B cell (primary cell): ENCODE measurements at regions of chr16 and their contacts with region 1.

Region 1: GRCh38 chr16:69123910-69124309 is 8.5 kb downstream of the CHTF8 start:
- DNase-seq: peak; percentile 77
- ATAC-seq: peak; percentile 70
- H3K4me3 ChIP-seq: no peak overlapping the region
- H3K4me3 Mint-ChIP-seq: no peak overlapping the region
- H3K27ac ChIP-seq: no peak overlapping the region
- H3K27ac Mint-ChIP-seq: no peak overlapping the region
- H3K4me1 ChIP-seq: no peaks in the 10 kb centered on the region
- H3K4me1 Mint-ChIP-seq: peaks cover 14% of the 10 kb centered on the region
- H3K27me3 ChIP-seq: no peaks in the 10 kb centered on the region
- H3K27me3 Mint-ChIP-seq: no peaks in the 10 kb centered on the region
- CTCF ChIP-seq: peak; percentile 81

Region 2: GRCh38 chr16:68590201-68590994 is 533.5 kb before region 1 on chr16:
- CTCF ChIA-PET with region 1: interaction called, 12 read pairs
- POLR2A ChIA-PET with region 1: no interaction called
- intact Hi-C with region 1: loop called (anchors 2 kb)
- DNase-seq: peak; percentile 33
- ATAC-seq: no peak
- H3K4me3 ChIP-seq: no peak overlapping the region
- H3K4me3 Mint-ChIP-seq: no peak overlapping the region
- H3K27ac ChIP-seq: no peak overlapping the region
- H3K27ac Mint-ChIP-seq: no peak overlapping the region
- H3K4me1 ChIP-seq: no peaks in the 10 kb centered on the region
- H3K4me1 Mint-ChIP-seq: peaks cover 2% of the 10 kb centered on the region
- H3K27me3 ChIP-seq: no peaks in the 10 kb centered on the region
- H3K27me3 Mint-ChIP-seq: peaks cover 13% of the 10 kb centered on the region
- CTCF ChIP-seq: peak; percentile 37

Region 3: DNA sequence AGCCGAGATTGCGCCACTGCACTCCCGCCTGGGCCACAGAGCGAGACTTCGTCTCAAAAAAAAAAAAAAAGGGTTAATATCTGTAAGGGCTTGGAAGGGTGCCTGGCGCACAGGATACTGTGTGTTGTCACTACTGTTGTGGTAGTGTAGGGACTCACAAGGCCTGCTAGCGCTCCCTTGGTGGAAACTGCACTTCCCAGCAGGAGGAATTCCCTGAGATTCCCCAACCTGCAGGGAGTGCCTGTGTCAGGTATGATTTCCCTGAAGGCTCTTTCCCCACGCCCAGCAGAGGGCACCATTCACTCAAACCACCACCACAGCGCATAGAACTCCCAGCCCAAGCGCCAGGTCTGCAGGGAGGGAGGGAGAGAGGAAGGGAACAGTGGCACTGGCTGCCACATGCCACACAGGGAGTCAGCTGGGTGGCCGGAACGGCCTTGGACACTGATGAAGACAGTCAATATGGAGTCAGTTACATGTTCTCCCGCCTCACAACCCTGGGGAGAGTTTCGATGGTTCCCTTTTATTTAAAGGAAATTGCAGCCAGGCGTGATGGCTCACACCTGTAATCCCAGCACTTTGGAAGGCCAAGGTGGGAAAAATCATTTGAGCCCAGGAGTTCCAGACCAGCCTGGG is 419.6 kb before region 1 on chr16:
- CTCF ChIA-PET with region 1: no interaction called
- POLR2A ChIA-PET with region 1: no interaction called
- intact Hi-C with region 1: loop called (anchors 2 kb)
- DNase-seq: peak; percentile 55
- ATAC-seq: peak; percentile 60
- H3K4me3 ChIP-seq: no peak overlapping the region
- H3K4me3 Mint-ChIP-seq: no peak overlapping the region
- H3K27ac ChIP-seq: no peak overlapping the region
- H3K27ac Mint-ChIP-seq: peak overlapping the region; percentile 6
- H3K4me1 ChIP-seq: no peaks in the 10 kb centered on the region
- H3K4me1 Mint-ChIP-seq: peaks cover 3% of the 10 kb centered on the region
- H3K27me3 ChIP-seq: no peaks in the 10 kb centered on the region
- H3K27me3 Mint-ChIP-seq: peaks cover 12% of the 10 kb centered on the region
- CTCF ChIP-seq: peak; percentile 64